Ovary (tissue), 10 donors: ENCODE measurements at regions of chr6 and their contacts with region 1.

Region 1: GRCh38 chr6:130697995-130698535 is 129.1 kb upstream of the SMLR1 start:
- DNase-seq: peak in 4 of 5 donors; percentile 27 to 61 (median 42)
- H3K4me3 ChIP-seq: no peak overlapping the region
- H3K27ac ChIP-seq: no peak overlapping the region
- H3K4me1 ChIP-seq: peaks cover 3% of the 10 kb centered on the region
- H3K27me3 ChIP-seq: no peaks in the 10 kb centered on the region
- CTCF ChIP-seq: peak in 2 of 3 donors; percentile 23 to 53
- EP300 ChIP-seq: no peak
- POLR2A ChIP-seq: no peak

Region 2: GRCh38 chr6:129575378-129576118 is 1122.5 kb before region 1 on chr6:
- intact Hi-C with region 1: no loop called
- DNase-seq: no peak
- H3K4me3 ChIP-seq: peak overlapping the region; percentile 28
- H3K27ac ChIP-seq: no peak overlapping the region
- H3K4me1 ChIP-seq: no peaks in the 10 kb centered on the region
- H3K27me3 ChIP-seq: no peaks in the 10 kb centered on the region
- CTCF ChIP-seq: peak in 2 of 3 donors; percentile 32 to 63
- EP300 ChIP-seq: no peak
- POLR2A ChIP-seq: no peak

Region 3: DNA sequence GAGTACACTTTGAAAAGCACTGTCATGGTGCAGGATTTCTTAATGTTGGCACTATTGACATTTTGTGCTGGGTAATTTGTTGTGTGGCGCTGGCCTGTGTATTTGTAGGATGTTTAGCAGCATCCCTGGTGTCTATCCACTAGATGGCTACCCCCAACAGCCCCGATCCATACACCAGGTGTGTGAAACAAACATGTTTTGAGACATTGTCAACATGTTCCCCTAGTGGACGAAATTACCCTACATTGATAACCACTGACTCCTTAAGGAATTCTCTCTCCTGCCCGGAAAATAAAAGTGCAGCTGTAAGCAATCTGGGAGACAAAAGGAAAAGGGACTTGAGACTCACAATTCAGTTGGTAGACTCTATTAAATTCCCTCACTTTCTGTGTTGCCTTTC is 384.9 kb before region 1 on chr6:
- intact Hi-C with region 1: loop called in 1 of 4 experiments (anchors 5 kb)
- DNase-seq: no peak
- H3K4me3 ChIP-seq: no peak overlapping the region
- H3K27ac ChIP-seq: no peak overlapping the region
- H3K4me1 ChIP-seq: no peaks in the 10 kb centered on the region
- H3K27me3 ChIP-seq: no peaks in the 10 kb centered on the region
- CTCF ChIP-seq: no peak
- EP300 ChIP-seq: no peak
- POLR2A ChIP-seq: no peak

Region 4: GRCh38 chr6:130836055-130836640 is 138.1 kb after region 1 on chr6:
- intact Hi-C with region 1: loop called in 1 of 4 experiments (anchors 10 kb)
- DNase-seq: no peak
- H3K4me3 ChIP-seq: no peak overlapping the region
- H3K27ac ChIP-seq: no peak overlapping the region
- H3K4me1 ChIP-seq: peaks cover 4% of the 10 kb centered on the region
- H3K27me3 ChIP-seq: no peaks in the 10 kb centered on the region
- CTCF ChIP-seq: no peak
- EP300 ChIP-seq: no peak
- POLR2A ChIP-seq: no peak